ENCODE measurements at regions of chr5 and their contacts with region 1.

Region 1: DNA sequence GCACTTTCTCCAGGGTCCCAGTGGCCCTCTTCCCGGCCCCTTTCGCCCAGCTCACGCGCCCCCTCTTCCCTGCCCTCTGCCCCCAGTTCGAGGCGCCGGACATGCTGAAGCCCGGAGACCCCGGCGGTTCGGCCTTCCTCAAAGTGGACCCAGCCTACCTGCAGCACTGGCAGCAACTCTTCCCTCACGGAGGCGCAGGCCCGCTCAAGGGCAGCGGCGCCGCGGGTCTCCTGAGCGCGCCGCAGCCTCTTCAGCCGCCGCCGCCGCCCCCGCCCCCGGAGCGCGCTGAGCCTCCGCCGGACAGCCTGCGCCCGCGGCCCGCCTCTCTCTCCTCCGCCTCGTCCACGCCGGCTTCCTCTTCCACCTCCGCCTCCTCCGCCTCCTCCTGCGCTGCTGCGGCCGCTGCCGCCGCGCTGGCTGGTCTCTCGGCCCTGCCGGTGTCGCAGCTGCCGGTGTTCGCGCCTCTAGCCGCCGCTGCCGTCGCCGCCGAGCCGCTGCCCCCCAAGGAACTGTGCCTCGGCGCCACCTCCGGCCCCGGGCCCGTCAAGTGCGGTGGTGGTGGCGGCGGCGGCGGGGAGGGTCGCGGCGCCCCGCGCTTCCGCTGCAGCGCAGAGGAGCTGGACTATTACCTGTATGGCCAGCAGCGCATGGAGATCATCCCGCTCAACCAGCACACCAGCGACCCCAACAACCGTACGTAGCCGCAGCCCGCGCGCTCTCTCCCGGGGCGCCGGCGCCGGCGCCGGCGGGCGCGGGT is 1.1 kb downstream of the PRDM6 start:
- DNase-seq: no peak
- H3K4me3 Mint-ChIP-seq: no peak overlapping the region
- H3K27ac Mint-ChIP-seq: no peak overlapping the region
- H3K4me1 Mint-ChIP-seq: peaks cover 14% of the 10 kb centered on the region
- H3K27me3 Mint-ChIP-seq: peaks cover 80% of the 10 kb centered on the region

Region 2: GRCh38 chr5:122774861-122775549 is 315.1 kb before region 1 on chr5 and contains the start of gene SNX2:
- intact Hi-C with region 1: no loop called
- DNase-seq: peak; percentile 78
- H3K4me3 Mint-ChIP-seq: peak within 1 kb of the TSS; percentile 91
- H3K27ac Mint-ChIP-seq: peak within 1 kb of the TSS; percentile 68
- H3K4me1 Mint-ChIP-seq: peaks cover 21% of the 10 kb centered on the region
- H3K27me3 Mint-ChIP-seq: peaks cover 13% of the 10 kb centered on the region
- total RNA-seq, gene SNX2: 31.5 and 36.4 TPM in 2 replicates

Region 3: DNA sequence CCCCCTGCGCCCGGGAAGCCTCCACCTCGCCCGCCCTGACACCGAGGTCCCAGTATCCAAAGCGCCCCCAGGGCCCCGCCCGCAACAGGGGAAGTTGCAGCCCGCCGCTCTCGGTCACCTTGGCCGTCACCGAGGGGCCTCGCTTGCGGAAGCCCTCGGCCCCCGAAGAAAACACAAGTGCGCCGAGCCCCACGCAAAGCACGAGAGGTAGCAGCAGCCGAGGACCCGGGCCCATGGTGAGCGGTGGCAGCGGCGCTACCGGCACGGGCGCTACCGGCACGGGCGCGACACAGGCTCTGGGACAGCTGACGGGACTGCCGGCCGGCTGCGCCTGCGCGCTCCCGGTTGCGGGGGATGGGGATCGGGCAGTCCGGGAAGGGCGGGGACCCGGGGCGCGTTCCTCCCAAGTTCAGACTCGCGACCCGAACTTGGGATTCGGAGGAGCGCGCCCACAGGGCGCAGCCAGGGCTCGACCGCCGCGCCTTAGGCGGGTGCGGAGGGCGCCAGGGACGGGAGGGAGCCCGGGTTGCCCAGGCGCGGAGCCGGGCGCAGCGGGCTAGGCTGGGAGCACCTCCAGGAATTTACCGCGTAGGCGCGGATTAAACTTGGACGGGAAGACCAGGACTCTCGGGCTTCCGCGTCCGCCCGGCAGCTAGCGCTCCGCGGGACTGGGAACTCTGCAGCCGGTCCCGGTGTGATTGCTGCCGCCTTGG is 53.5 kb before region 1 on chr5 and contains the start of gene PPIC:
- intact Hi-C with region 1: loop called (anchors 2 kb)
- DNase-seq: no peak
- H3K4me3 Mint-ChIP-seq: peak within 1 kb of the TSS; percentile 22
- H3K27ac Mint-ChIP-seq: no peak within 1 kb of the TSS
- H3K4me1 Mint-ChIP-seq: peaks cover 12% of the 10 kb centered on the region
- H3K27me3 Mint-ChIP-seq: peaks cover 62% of the 10 kb centered on the region
- total RNA-seq, gene PPIC: not detected in 2 replicates

Region 4: DNA sequence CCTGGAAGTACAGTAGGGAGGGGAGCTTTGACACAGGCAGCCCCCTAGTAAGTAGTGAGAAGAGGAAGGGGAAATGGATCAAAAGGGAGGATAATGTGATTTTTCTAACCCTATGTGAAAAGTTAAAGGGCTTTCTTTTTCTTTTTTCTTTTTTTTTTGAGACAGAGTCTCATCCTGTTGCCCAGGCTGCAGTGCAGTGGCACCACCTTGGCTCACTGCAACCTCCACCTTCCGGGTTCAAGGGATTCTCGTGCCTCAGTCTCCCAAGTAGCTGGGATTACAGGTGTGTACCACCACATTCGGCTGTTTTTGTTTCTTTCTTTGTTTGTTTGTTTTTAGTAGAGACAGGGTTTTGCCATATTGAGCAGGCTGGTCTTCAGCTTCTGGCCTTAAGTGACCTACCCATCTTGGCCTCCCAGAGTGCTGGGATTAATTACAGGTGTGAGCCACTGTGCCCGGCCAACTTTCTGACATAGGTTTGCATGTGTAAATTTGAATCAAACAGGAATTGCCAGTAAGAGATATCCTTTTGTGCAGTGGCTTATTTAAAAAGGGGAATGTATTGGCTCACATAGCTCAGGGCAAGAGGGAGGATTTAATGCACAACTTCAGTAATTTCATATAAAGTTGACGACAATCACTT is 14.4 kb before region 1 on chr5:
- intact Hi-C with region 1: no loop called
- DNase-seq: no peak
- H3K4me3 Mint-ChIP-seq: no peak overlapping the region
- H3K27ac Mint-ChIP-seq: no peak overlapping the region
- H3K4me1 Mint-ChIP-seq: no peaks in the 10 kb centered on the region
- H3K27me3 Mint-ChIP-seq: peaks cover 22% of the 10 kb centered on the region

Region 5: DNA sequence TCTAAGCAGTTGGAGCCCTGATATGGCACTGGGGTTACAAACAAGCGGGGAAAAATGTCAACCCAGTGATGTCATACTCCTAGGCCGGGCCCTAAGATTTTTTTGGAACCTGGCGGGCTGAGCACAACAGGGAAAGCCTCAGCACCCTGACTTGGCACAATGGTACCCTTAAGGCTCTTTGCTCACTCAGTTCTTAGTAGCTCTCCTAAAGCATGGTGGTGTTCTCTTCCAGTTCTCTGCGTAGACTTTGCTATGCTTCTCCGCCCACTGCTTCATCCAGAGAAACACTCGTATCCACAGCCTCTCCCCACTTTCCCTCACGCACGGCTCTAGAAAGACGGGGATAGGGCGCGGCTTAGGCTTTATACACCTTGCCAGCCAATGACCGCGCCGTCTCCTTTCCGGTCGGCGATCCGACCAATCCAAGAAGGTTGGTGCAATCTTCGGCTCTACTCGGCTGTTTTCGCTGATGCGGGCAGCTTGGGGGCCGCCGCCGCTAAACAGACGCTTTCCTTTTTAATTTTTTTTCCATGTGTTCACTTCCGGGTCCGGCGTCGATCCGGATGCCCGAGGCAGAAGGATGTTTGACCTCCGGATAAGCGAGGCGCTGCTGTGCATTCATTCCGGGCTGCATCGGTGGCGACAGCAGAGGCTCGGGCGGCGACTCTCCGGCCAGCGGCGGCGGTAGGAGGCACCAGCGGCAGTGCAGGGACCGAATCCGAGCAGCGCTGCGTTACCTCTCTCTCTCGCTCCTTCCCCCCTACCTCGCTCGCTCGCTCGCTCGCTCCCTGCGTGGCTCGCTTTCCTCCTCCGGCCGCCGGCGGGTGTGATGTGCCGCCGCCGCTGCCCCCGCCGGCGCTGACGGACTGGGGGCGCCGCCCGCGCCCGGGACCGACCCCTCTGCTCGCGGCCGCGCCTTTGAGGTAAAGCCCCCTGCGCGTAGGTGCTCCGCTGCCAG is 421.8 kb after region 1 on chr5 and contains the start of gene CSNK1G3:
- intact Hi-C with region 1: no loop called
- DNase-seq: peak; percentile 92
- H3K4me3 Mint-ChIP-seq: peak within 1 kb of the TSS; percentile 95
- H3K27ac Mint-ChIP-seq: peak within 1 kb of the TSS; percentile 96
- H3K4me1 Mint-ChIP-seq: peaks cover 39% of the 10 kb centered on the region
- H3K27me3 Mint-ChIP-seq: peaks cover 5% of the 10 kb centered on the region
- total RNA-seq, gene CSNK1G3: 37.7 and 38.2 TPM in 2 replicates

Region 6: DNA sequence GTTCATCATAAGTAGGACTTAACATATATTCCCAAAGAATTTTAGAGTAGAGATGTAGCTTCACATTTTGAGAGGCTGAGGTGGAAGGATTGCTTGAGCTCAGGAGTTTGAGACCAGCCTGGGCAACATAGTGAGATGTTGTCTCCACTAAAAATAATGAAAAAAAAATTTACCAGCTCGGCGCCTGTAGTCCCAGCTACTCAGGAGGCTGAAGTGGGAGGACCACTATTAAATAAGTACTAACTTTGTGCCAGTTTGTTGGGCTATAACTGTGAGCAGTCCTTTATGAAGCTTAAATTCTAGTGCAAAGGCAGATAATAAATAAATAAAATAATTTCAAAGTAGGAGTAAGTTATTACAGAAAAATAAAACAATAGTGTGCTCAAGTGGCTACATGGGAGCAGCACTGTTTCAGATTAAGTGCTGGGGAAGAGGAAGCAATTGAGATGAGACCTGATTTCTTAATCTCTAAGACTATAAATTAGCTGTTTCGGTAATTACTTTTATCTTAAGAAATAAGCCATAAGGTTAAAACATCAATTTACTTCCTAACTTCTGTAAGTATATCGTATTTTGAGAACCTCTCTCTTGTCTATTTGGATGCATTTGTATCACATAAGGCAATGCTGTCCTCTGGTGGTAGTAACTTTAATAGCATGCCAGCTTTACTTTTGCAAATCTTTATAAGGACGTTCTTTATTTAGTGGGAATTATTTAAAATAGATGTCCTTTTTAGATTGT is 520.7 kb after region 1 on chr5:
- intact Hi-C with region 1: loop called (anchors 1 kb)
- DNase-seq: no peak
- H3K4me3 Mint-ChIP-seq: no peak overlapping the region
- H3K27ac Mint-ChIP-seq: peak overlapping the region; percentile 49
- H3K4me1 Mint-ChIP-seq: peaks cover 15% of the 10 kb centered on the region
- H3K27me3 Mint-ChIP-seq: no peaks in the 10 kb centered on the region